Posterior cingulate gyrus (tissue), 11 donors: ENCODE measurements at regions of chr3 and their contacts with region 1.

Region 1: DNA sequence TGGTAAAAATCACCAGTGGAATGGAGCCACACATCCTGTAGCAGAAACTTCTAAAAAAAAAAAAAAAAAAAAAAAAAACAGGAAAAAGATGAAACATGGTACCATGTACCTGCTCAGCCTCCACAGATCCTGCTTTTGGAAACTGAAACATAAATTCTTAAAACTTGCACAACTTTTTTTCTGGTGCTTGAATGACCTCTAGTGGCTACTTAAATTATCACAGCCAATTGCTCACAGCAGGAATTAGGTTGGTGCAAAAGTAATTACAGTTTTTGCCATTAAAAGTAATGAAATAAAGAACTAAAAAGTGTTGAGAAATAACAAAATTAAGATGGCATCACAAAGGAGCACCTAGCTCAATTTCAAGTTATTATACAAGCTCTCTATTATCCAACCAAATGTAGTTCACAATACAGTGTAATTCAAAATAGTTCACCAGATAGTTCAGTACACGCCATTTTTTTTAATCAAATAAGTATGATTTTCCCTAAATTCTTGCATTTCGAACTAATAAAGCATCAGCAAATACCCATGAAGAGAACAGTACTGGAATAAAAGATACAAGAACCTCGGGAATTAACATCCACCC is 80.6 kb downstream of the ULK4 start:
- DNase-seq: no peak

Region 2: DNA sequence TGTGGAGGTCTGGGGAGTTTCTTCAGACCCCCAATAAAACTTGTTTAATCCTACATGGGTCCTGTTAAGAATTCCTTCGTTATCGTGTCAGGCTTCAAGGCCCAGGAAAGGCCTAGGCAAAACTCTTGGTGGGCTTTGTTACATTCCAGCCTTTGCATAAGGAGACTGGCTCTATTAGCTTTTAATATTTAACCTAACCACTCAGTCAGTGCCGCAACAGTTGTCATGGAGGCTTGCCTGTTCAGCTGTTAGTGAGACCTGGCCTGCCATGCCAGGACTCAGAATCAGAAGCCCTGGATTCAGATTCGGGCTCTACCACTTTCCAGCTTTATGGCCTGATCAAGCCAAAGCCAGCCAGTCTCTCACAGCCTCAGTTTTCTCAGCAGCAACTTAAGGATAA is 1552.3 kb before region 1 on chr3:
- intact Hi-C with region 1: loop called (anchors 5 kb)
- DNase-seq: no peak

Region 3: DNA sequence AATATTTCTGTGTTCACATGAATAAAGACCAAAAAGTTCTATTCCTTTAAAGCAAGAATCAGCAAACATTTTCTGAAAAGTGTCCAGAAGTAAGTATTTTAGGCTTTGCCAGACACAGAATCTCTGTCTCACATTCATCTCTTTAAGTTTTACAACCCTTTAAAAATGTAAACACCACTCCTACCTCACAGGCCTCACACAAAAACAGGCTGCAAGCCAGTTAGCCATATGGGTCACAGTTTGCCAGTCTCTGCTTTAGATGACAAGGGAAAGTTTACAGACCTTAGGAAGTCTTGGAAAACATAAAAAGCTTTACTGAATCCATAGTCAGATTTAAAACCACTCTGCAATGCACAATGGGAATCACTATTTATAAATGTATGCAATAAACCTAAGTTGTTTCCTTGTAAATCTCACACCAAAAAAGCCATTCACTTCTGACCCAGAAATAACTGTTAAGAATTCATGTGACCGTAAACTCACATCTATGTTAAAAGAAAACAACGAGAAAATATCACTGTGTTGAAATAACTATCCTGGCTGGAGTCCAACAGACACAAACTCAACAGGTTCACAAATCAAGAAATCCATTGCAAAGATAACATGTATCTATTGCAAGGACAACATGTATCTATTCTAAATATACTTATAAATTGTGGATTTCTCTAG is 227.6 kb before region 1 on chr3:
- intact Hi-C with region 1: no loop called
- DNase-seq: no peak

Region 4: DNA sequence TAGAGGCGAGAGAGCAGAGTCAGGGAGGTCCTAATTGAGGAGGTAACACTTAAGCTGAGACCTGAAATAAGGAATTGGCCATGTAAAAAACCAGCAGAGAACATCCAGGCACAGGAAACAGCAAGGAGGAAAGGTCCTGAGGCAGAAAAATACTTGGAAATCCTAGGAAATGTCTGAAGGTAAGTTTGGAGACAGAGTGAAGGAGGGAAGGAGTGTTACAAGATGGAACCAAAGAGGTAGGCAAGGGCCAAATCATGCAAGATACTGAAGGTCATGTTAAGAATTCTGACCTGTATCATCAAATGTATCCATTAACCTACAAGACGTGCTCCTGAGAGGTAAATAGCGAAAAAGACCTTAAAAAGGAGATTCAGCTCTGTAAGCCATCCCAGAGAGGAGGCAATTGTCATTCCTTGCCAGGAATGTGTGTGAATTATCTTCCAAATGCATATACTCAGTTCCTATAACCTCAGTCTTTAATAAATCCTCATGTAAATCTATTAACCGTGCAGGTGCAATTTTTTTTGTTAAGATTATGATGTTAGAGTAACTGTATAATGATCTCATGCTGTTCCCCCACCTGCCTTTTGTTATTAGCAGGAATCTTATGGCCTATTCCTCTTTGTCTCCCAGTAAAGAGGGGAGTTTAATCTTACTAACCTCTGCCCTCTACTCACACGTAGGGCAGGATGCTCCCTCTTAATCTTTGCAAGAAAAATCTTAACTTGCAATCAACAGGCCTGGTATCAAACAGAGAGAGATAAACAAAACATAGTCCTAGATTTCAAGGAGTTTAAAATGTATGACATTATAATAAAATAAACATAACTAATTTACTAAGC is 86.4 kb before region 1 on chr3:
- intact Hi-C with region 1: no loop called
- DNase-seq: no peak

Region 5: DNA sequence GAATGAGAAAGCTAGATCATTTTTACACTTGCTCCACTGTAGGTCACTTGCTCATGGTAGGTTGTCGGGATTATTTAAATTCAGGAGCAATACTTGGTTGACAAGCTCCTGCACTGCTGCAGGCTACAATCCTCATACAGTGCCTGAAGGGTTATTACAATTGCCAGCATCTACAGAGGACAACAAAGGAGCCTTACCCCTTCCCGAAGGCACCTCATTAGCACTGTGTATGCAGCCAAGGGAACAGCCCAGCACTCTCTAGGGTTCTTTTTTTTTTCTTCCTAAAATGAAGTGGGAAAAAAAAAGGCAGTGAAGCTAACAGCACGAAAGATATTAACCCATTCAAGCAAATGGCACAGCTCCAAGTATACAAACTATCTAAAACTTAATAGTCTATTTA is 62.1 kb before region 1 on chr3:
- intact Hi-C with region 1: no loop called
- DNase-seq: no peak